ENCODE measurements at regions of chr15 and their contacts with region 1.

Region 1: DNA sequence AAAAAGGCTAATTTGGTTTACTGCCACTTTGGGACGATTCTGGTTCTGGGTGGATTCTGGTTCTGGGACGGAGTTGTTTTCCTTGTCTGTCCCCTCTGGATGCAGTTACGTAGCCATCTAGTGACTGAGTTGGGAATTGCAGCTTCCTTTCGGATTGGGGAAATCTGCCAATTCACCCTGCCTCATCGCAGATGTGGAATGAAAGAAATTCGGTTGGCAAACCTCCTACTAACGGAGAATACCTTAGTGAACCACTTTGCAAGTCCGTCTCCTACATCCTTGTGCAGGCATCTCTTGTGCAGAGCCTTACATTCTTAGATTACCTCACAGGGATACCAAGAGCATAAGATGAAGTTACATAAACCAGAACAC is 31.5 kb upstream of the AP4E1 start:
- DNase-seq: peak; percentile 14 to 93 (median 78)

Region 2: DNA sequence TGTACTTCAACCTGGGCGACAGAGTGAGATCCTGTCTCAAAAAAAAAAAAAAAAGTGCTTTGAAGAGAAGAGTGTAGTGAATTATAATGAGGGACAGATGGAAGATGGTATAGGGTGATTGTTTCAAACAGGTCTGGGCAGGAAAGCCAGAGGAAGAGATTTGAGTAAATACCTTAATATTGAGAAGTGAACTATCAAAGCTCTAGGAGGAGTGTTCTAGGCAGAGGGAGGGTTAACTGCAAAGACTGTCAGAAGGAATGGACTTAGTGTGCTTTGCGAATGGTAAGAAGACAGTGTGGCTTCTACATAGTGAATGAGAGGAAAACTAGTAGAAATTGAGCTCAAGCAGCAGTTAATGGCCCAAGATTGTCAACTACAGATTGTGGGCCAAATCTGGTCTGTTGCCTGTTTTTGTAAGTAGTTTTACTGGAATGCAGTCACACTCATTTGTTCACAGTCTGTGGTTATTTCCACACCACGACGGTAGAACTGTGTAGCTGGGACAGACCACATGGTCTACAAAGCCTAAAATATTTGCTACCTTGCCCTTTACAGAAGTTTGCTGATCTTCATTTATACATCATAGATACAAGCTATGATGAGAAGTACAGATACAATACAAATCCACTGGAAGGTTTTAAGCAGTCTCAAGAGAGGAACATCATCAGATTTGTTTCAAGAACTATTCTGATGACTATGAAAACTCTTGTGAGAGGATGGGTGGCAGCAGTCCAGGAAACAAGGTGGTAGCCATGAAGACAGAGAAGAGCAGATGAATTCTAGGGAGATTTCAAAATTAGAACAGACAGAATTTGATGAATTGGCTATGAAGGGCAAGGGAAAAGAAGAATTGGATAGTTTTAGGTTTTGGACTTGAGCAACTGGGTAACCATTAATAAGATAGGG is 314.0 kb before region 1 on chr15:
- intact Hi-C with region 1: no loop called
- DNase-seq: no peak

Region 3: DNA sequence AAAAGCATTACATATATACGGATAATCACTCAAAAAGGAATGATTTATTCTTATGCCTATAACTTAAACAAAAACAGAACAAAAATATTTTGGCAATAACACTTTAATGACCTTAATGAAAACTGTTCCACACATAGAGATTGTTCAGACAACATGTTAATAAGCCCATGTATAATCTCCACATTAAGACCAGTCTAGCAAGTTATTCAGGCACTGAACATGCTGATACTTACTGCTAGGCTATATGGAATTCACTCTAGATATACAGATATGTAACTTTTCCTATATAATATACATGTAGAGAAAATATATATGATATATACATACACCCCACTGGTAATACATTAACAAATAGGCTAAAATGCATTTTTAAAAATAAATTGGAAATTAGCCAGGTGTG is 286.7 kb before region 1 on chr15:
- intact Hi-C with region 1: no loop called
- DNase-seq: no peak

Region 4: GRCh38 chr15:50675536-50676144 is 201.3 kb before region 1 on chr15:
- intact Hi-C with region 1: loop called (anchors 5 kb)
- DNase-seq: peak in 1 of 42 donors; percentile 23

Measured in head of caudate nucleus (tissue), 42 donors.